Left ventricle myocardium superior (tissue), 1 donor: ENCODE measurements at regions of chr16 and their contacts with region 1.

Region 1: DNA sequence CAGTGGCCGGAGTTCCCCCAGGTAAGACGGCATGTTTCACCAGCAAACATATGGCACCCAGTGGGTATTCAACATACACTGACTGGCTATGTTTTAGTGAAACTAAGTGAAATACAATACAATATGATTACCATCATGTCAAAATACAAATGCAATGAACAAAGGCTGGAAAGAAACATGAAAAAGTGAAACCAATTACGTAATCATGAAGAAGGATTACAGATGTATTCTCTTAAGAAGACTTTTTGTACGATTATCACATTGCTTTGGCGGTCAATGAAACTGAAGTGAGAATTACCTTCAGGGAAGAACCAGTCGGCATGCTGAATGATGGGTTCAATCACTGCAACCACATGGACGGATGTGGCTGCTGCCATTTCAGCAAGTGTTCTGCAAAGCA is 71.7 kb downstream of the ARHGAP17 start:
- DNase-seq: no peak
- ATAC-seq: no peak

Region 2: DNA sequence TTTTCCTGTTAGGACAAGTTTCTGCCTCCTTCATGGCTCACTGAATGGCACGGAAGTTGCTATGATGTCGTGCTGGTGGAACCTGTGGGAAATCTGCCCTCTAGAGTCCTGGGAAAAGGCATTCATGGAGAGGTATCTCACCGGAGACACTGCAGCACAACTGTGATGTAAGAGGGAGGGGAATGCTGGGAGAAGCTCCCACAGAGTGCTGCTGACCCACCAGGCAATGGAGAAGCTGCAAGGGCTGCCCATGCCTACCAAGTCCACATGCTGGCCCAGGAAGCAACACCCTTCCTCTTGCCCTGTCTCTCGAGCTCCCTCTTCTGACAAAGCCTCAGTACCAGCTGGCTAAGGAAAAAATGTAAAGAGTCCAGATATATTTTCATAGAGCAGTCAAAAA is 142.9 kb before region 1 on chr16:
- intact Hi-C with region 1: loop called (anchors 10 kb)
- DNase-seq: no peak
- ATAC-seq: peak; percentile 49

Region 3: GRCh38 chr16:24834459-24835335 is 108.8 kb before region 1 on chr16:
- intact Hi-C with region 1: no loop called
- DNase-seq: no peak
- ATAC-seq: peak; percentile 49

Region 4: DNA sequence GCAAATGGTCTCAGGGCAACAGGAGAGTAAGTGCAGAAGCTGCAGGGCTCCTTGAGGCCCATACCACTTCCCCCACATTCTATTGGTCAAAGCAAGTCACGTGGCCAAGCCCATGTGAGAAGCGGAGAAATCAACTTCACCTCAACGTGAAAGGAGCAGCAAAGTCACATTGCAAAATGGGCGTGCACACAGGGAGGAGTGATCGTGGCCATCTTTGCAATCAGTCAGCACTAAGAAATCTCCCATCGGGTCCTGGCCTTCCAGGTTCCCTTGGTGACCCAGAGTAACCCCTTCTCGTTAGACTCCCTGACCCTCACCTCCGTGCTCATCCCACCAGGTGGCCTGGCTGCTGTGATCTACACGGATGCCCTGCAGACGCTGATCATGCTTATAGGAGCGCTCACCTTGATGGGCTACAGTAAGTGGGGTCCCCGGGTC is 59.7 kb before region 1 on chr16:
- intact Hi-C with region 1: no loop called
- DNase-seq: no peak
- ATAC-seq: no peak

Region 5: GRCh38 chr16:25443994-25444393 is 500.5 kb after region 1 on chr16:
- intact Hi-C with region 1: no loop called
- DNase-seq: no peak
- ATAC-seq: no peak